ENCODE measurements at regions of chr20 and their contacts with region 1.

Region 1: DNA sequence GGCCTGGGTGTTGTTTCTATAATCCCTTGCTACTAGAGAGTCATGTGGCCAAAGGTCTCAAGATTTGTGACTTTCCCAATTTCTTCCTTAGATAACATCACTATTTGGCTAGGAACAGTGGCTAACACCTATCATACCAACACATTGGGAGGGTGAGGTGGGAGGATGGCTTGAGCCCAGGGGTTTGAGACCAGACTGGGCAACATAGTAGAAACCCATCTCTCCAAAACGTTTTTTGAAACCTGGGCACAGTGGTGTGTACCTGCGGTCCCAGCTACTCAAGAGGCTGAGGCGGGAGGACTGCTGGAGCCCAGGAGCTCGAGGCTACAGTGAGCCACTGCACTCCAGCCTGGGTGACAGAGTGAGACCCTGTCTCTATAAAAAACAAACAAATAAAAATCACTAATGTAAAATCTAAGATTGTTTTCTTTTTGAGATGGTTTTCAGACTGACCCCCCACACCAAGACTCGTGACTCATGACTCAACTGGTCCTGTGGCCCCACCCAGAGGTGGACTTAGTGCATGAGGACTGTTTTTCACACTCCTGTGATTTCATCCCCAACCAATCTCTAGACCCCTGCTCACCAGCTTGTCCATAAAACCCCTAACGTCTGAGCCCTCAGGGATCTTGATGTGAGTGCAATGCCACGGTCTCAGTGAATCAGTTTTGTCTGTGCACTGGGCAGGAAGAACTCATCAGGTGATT is 48.3 kb upstream of the KIF16B start:
- DNase-seq: no peak
- ATAC-seq: no peak
- H3K4me3 ChIP-seq: no peak overlapping the region
- H3K27ac ChIP-seq: no peak overlapping the region
- H3K4me1 ChIP-seq: no peaks in the 10 kb centered on the region
- H3K27me3 ChIP-seq: no peaks in the 10 kb centered on the region
- CTCF ChIP-seq: no peak

Region 2: DNA sequence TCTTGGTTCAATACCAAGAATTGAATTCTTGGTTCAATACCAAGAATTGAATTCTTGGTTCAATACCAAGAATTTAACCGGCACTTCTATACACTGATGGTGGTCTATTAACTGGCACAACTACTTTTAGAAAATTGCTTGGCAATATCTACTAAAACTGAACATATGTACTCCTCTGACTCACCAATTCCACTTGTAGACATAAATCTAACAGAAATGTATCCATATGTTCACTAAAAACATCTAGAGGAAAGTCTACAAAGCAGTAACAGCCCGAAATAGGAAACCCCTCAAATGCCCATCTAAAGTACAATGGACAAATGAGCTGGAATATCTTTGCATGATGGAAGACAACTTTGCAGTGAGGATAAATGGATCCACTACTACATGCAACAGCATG is 120.3 kb before region 1 on chr20:
- intact Hi-C with region 1: loop called in 1 of 3 experiments (anchors 10 kb)
- DNase-seq: no peak
- ATAC-seq: no peak
- H3K4me3 ChIP-seq: no peak overlapping the region
- H3K27ac ChIP-seq: no peak overlapping the region
- H3K4me1 ChIP-seq: no peaks in the 10 kb centered on the region
- H3K27me3 ChIP-seq: no peaks in the 10 kb centered on the region
- CTCF ChIP-seq: no peak

Region 3: GRCh38 chr20:17093782-17094181 is 472.2 kb after region 1 on chr20:
- intact Hi-C with region 1: no loop called
- DNase-seq: no peak
- ATAC-seq: peak in 1 of 4 donors; percentile 49
- H3K4me3 ChIP-seq: no peak overlapping the region
- H3K27ac ChIP-seq: no peak overlapping the region
- H3K4me1 ChIP-seq: no peaks in the 10 kb centered on the region
- H3K27me3 ChIP-seq: no peaks in the 10 kb centered on the region
- CTCF ChIP-seq: no peak